MCF 10A (cell line): ENCODE measurements at regions of chr13 and their contacts with region 1.

Region 1: GRCh38 chr13:41916173-41916954 is 44.5 kb downstream of the VWA8 start:
- DNase-seq: peak; percentile 75
- H3K4me3 Mint-ChIP-seq: peak overlapping the region; percentile 41
- H3K27ac Mint-ChIP-seq: peak overlapping the region; percentile 90
- H3K4me1 Mint-ChIP-seq: peaks cover 17% of the 10 kb centered on the region
- H3K27me3 Mint-ChIP-seq: no peaks in the 10 kb centered on the region
- CTCF ChIP-seq: no peak

Region 2: DNA sequence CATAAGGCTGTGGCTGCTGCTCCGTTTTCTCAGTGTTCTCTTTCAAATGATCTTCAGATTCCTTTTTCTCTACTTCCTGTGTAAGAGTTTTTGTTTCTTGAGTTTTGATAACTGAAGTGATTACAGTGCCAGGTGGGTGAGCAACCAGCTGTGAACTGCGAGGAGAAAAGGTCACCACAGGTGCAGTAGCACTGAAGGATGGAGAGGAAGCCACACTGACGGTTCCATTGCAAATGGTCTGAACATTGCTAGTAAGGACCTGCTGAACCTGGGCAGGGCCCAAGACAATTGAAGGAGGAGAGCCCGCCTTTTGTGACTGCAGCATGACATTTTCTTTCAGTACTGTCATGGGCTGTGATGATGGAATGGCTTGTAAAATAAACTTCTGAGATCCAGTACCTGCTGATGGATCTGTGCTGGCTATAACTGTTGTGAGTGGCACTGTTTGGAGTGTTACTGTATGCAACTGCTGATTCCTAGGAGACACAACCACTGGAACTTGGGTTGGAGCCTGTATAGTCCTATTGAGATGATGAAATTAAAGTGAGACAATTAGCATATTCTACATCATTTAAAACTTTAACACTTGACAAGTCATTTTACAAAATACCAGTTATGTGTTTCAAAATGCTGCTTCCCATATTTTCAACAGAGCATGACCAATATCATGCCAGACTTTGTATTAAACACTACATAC is 982.7 kb before region 1 on chr13:
- CTCF ChIA-PET with region 1: no interaction called
- POLR2A ChIA-PET with region 1: no interaction called
- intact Hi-C with region 1: no loop called
- DNase-seq: no peak
- H3K4me3 Mint-ChIP-seq: no peak overlapping the region
- H3K27ac Mint-ChIP-seq: peak overlapping the region; percentile 36
- H3K4me1 Mint-ChIP-seq: no peaks in the 10 kb centered on the region
- H3K27me3 Mint-ChIP-seq: no peaks in the 10 kb centered on the region
- CTCF ChIP-seq: no peak

Region 3: GRCh38 chr13:41942462-41943094 is 26.2 kb after region 1 on chr13:
- CTCF ChIA-PET with region 1: interaction called, 11 read pairs
- POLR2A ChIA-PET with region 1: no interaction called
- intact Hi-C with region 1: no loop called
- DNase-seq: peak; percentile 34
- H3K4me3 Mint-ChIP-seq: no peak overlapping the region
- H3K27ac Mint-ChIP-seq: no peak overlapping the region
- H3K4me1 Mint-ChIP-seq: no peaks in the 10 kb centered on the region
- H3K27me3 Mint-ChIP-seq: no peaks in the 10 kb centered on the region
- CTCF ChIP-seq: no peak